ENCODE measurements at regions of chr6 and their contacts with region 1.

Region 1: GRCh38 chr6:42043787-42044475 is 6.4 kb upstream of the TAF8 start:
- DNase-seq: peak; percentile 87
- ATAC-seq: peak; percentile 32
- H3K4me3 ChIP-seq: peak overlapping the region in 1 of 5 experiments; percentile 23
- H3K4me3 Mint-ChIP-seq: peak overlapping the region; percentile 69
- H3K27ac ChIP-seq: peak overlapping the region; percentile 26 to 56
- H3K27ac Mint-ChIP-seq: peak overlapping the region; percentile 88
- H3K4me1 ChIP-seq: peaks cover 67 to 80% of the 10 kb centered on the region in 2 donors
- H3K4me1 Mint-ChIP-seq: peaks cover 82% of the 10 kb centered on the region
- H3K27me3 ChIP-seq: no peaks in the 10 kb centered on the region
- H3K27me3 Mint-ChIP-seq: no peaks in the 10 kb centered on the region
- CTCF ChIP-seq: peak; percentile 89

Region 2: GRCh38 chr6:41846666-41847237 is 197.2 kb before region 1 on chr6:
- CTCF ChIA-PET with region 1: interaction called, 176 read pairs
- POLR2A ChIA-PET with region 1: no interaction called
- intact Hi-C with region 1: loop called (anchors 1 kb)
- DNase-seq: peak; percentile 70
- ATAC-seq: peak; percentile 49
- H3K4me3 ChIP-seq: no peak overlapping the region
- H3K4me3 Mint-ChIP-seq: no peak overlapping the region
- H3K27ac ChIP-seq: no peak overlapping the region
- H3K27ac Mint-ChIP-seq: no peak overlapping the region
- H3K4me1 ChIP-seq: no peaks in the 10 kb centered on the region
- H3K4me1 Mint-ChIP-seq: no peaks in the 10 kb centered on the region
- H3K27me3 ChIP-seq: no peaks in the 10 kb centered on the region
- H3K27me3 Mint-ChIP-seq: no peaks in the 10 kb centered on the region
- CTCF ChIP-seq: peak; percentile 87

Region 3: DNA sequence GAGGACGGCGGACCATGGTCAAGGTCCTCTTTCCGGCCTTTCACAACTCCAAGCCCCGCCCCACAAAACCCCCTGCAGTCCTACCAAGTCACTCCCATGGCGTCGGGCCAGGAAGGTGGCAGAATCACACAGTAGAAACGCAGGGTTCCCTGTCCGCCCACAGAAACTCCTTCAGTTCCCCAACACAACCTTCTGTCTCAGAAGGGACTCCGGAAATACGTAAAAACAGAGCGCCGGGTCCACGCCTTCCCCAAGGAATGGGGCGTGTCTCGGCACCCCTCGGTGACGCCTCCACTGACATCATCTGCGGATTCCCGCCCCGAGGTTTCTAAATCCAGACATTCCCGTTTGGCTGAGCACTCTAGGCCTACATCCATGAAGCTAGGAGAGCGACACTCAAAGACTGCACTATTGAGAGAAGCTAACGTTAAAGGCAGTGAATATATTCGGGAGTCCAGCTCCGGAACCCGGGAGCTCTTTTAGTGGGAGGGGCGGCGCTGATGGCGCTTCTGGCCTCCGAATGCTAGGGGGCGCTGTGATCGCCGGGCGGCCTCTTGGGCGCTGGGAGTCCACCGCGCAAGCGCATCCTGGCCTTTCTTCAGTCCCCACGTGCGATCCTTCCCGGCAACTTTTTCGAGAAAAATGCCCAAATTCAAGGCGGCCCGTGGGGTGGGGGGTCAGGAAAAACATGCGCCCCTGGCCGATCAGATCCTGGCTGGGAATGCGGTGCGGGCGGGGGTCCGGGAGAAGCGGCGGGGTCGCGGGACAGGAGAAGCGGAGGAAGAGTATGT is 122.8 kb before region 1 on chr6 and contains the starts of genes BYSL and MED20:
- CTCF ChIA-PET with region 1: interaction called, 128 read pairs
- POLR2A ChIA-PET with region 1: interaction called, 13 read pairs
- intact Hi-C with region 1: loop called (anchors 1 kb)
- DNase-seq: peak; percentile 98
- ATAC-seq: peak; percentile 93
- H3K4me3 ChIP-seq: peak within 1 kb of the TSS; percentile 67 to 99 (median 97)
- H3K4me3 Mint-ChIP-seq: peak within 1 kb of the TSS; percentile 98
- H3K27ac ChIP-seq: peak within 1 kb of the TSS; percentile 91 to 96
- H3K27ac Mint-ChIP-seq: peak within 1 kb of the TSS; percentile 98
- H3K4me1 ChIP-seq: peaks cover 26 to 29% of the 10 kb centered on the region in 2 donors
- H3K4me1 Mint-ChIP-seq: peaks cover 47% of the 10 kb centered on the region
- H3K27me3 ChIP-seq: no peaks in the 10 kb centered on the region
- H3K27me3 Mint-ChIP-seq: no peaks in the 10 kb centered on the region
- CTCF ChIP-seq: peak; percentile 93
- total RNA-seq, gene BYSL: 10.5 and 11.1 TPM in 2 replicates
- total RNA-seq, gene MED20: 18.2 and 24.2 TPM in 2 replicates

Region 4: GRCh38 chr6:41936073-41936837 is 107.7 kb before region 1 on chr6:
- CTCF ChIA-PET with region 1: interaction called, 263 read pairs
- POLR2A ChIA-PET with region 1: interaction called, 4 read pairs
- intact Hi-C with region 1: loop called (anchors 1 kb)
- DNase-seq: peak; percentile 78
- ATAC-seq: peak; percentile 74
- H3K4me3 ChIP-seq: no peak overlapping the region
- H3K4me3 Mint-ChIP-seq: peak overlapping the region; percentile 56
- H3K27ac ChIP-seq: peak overlapping the region; percentile 10 to 59
- H3K27ac Mint-ChIP-seq: peak overlapping the region; percentile 87
- H3K4me1 ChIP-seq: peaks cover 64 to 71% of the 10 kb centered on the region in 2 donors
- H3K4me1 Mint-ChIP-seq: peaks cover 65% of the 10 kb centered on the region
- H3K27me3 ChIP-seq: no peaks in the 10 kb centered on the region
- H3K27me3 Mint-ChIP-seq: no peaks in the 10 kb centered on the region
- CTCF ChIP-seq: peak; percentile 83

Region 5: GRCh38 chr6:42021847-42022754 is 21.8 kb before region 1 on chr6:
- CTCF ChIA-PET with region 1: interaction called, 130 read pairs
- POLR2A ChIA-PET with region 1: interaction called, 11 read pairs
- intact Hi-C with region 1: loop called (anchors 1 kb)
- DNase-seq: peak; percentile 86
- ATAC-seq: peak; percentile 46
- H3K4me3 ChIP-seq: peak overlapping the region in 3 of 5 experiments; percentile 4 to 46 (median 17)
- H3K4me3 Mint-ChIP-seq: peak overlapping the region; percentile 77
- H3K27ac ChIP-seq: peak overlapping the region; percentile 79 to 93
- H3K27ac Mint-ChIP-seq: peak overlapping the region; percentile 95
- H3K4me1 ChIP-seq: peaks cover 74 to 78% of the 10 kb centered on the region in 2 donors
- H3K4me1 Mint-ChIP-seq: peaks cover 77% of the 10 kb centered on the region
- H3K27me3 ChIP-seq: no peaks in the 10 kb centered on the region
- H3K27me3 Mint-ChIP-seq: no peaks in the 10 kb centered on the region
- CTCF ChIP-seq: peak; percentile 13

Measured in B cell (primary cell).